Prostate gland (tissue), 2 donors: ENCODE measurements at regions of chr4 and their contacts with region 1.

Region 1: DNA sequence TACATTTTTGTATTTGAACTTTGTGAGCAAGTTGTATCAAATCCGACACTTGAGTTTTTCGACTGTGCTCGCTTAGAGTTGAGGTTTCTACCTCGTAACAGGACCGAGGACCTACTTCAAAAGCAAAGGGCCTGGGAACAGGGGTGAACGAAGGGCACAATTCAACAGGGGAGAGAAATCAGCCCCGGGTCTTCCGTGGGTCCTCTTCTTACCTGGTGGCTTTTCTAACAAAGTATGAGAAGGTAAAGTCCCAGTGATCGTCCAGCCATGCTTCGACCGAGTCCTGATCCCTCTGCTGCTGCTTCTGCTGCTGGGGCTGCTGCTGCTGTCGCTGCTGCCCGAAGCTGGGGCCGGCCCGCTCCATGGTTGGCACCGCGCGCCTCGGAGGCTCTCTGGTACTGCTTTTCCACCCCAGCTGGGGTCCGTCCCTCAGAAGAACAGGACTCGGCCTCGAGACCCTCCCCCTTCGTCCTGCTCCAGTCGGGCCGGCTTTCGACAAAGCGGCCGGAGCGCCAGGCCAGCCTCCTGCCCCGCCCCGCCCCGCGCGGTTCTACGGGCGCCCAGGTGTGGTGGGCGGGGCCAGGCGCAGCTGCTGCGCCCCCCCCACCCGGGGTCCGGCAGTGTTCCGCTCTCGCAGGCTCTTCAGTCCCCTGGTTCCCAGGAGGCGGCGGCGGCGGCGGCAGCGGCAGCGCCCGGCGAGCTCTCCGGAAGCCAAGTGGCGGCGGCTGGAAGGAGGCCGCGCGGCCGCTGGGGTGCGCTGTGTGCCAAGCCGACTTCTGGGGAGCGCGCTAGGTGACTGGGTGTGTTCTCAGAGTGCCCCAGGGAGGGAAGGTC is at the start of gene PDE5A:
- DNase-seq: peak; percentile 82
- H3K4me3 ChIP-seq: peak within 1 kb of the TSS; percentile 60 to 66
- H3K27ac ChIP-seq: peak within 1 kb of the TSS; percentile 85 to 89
- H3K4me1 ChIP-seq: no peaks in the 10 kb centered on the region
- H3K27me3 ChIP-seq: no peaks in the 10 kb centered on the region
- CTCF ChIP-seq: peak; percentile 68 to 94 (median 81)
- POLR2A ChIP-seq: peak; percentile 70
- total RNA-seq, gene PDE5A: 46.0 to 49.6 TPM

Region 2: DNA sequence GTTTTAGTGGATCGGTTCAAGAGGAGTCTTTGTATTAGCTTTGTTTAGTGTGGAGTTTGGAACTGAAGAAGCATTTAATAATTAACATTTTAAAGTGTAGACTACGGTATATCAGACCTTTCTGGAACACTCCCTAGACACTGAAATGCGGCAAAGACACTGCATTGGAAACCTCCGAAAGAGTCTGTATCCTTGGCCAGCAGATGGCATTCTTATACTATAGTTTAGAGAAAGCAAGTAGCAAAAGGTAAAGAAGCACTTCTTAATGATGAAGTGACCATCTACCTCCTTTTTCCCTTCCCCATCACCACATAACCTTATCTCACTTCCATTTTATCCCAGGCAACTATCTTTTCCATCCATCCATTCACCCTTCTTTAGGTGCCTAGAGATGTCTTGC is 314.2 kb before region 1 on chr4:
- intact Hi-C with region 1: loop called (anchors 10 kb)
- DNase-seq: no peak
- H3K4me3 ChIP-seq: no peak overlapping the region
- H3K27ac ChIP-seq: no peak overlapping the region
- H3K4me1 ChIP-seq: no peaks in the 10 kb centered on the region
- H3K27me3 ChIP-seq: no peaks in the 10 kb centered on the region
- CTCF ChIP-seq: peak in 2 of 4 experiments; percentile 41 to 52
- POLR2A ChIP-seq: no peak

Region 3: DNA sequence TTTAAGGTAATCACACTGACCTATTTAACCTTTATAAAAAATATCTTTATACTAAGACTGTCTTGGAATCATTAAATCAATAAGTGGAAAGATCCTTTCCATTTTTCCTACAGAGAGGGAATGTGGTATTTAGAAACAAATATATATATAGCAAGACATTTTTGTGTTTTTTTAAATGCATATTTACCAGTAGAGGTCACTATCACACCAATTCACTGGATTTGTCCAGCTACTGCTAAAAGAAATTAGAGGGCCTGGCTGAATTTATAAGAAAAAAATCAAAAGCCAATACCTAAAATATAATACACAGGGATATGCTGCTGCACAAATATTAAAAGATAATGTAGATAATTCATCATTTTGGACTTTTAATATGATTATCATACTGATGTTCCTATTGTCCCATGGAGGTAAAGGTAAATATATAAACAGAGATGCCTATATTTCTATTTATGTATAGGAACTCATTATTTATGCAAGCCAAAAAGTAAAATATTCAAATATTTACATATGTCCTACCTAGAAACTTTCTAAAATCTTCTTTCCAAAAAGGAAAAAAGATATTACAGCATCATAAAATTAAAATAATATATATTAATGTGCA is 69.4 kb before region 1 on chr4:
- intact Hi-C with region 1: loop called (anchors 2 kb)
- DNase-seq: no peak
- H3K4me3 ChIP-seq: no peak overlapping the region
- H3K27ac ChIP-seq: no peak overlapping the region
- H3K4me1 ChIP-seq: no peaks in the 10 kb centered on the region
- H3K27me3 ChIP-seq: no peaks in the 10 kb centered on the region
- CTCF ChIP-seq: peak in 3 of 4 experiments; percentile 32 to 53 (median 51)
- POLR2A ChIP-seq: no peak

Region 4: GRCh38 chr4:119707336-119707735 is 78.8 kb after region 1 on chr4:
- intact Hi-C with region 1: no loop called
- DNase-seq: no peak
- H3K4me3 ChIP-seq: no peak overlapping the region
- H3K27ac ChIP-seq: no peak overlapping the region
- H3K4me1 ChIP-seq: no peaks in the 10 kb centered on the region
- H3K27me3 ChIP-seq: no peaks in the 10 kb centered on the region
- CTCF ChIP-seq: no peak
- POLR2A ChIP-seq: no peak

Region 5: DNA sequence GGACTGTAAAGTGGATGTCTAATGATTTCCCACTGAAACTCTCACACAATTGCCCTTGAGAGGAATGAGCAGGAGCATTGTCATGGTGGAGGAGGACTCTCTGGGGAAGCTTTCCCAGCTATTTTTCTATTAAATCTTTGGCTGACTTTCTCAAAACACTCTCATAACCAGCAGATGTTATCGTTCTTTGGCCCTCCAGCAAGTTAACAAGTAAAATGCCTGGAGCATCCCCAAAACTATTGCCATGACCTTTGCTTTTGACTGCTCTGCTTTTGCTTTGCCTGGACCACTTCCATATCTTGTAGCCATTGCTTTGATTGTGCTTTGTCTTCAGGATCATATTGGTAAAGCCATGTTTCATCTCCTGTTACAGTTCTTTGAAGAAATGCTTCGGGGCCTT is 120.3 kb after region 1 on chr4:
- intact Hi-C with region 1: no loop called
- DNase-seq: no peak
- H3K4me3 ChIP-seq: no peak overlapping the region
- H3K27ac ChIP-seq: no peak overlapping the region
- H3K4me1 ChIP-seq: no peaks in the 10 kb centered on the region
- H3K27me3 ChIP-seq: no peaks in the 10 kb centered on the region
- CTCF ChIP-seq: no peak
- POLR2A ChIP-seq: no peak

Region 6: GRCh38 chr4:119774840-119775239 is 146.3 kb after region 1 on chr4:
- intact Hi-C with region 1: loop called (anchors 10 kb)
- DNase-seq: no peak
- H3K4me3 ChIP-seq: no peak overlapping the region
- H3K27ac ChIP-seq: no peak overlapping the region
- H3K4me1 ChIP-seq: no peaks in the 10 kb centered on the region
- H3K27me3 ChIP-seq: no peaks in the 10 kb centered on the region
- CTCF ChIP-seq: no peak
- POLR2A ChIP-seq: no peak

Region 7: GRCh38 chr4:119897260-119897659 is 268.7 kb after region 1 on chr4:
- intact Hi-C with region 1: loop called (anchors 5 kb)
- DNase-seq: no peak
- H3K4me3 ChIP-seq: no peak overlapping the region
- H3K27ac ChIP-seq: no peak overlapping the region
- H3K4me1 ChIP-seq: no peaks in the 10 kb centered on the region
- H3K27me3 ChIP-seq: no peaks in the 10 kb centered on the region
- CTCF ChIP-seq: no peak
- POLR2A ChIP-seq: no peak